ENCODE measurements at regions of chr2 and their contacts with region 1.

Region 1: DNA sequence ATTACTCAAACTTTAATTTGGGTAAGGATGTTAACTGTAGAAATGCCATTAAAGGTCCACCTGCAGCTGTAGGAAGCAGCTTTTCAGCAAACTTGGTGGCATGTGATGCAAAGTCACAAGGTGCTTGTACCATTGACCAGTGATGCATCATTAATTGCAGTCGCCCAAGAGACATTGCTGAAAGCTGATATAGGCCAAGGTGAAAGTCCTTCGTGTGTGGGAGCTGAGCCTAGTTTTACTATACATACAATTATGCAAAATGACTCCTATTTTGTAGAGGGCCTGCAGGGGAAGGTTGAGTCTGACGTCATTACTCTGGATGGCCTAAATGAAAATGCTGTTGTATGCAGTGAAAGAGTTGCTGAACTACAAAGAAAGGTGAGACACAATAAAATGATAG is 40.5 kb downstream of the ALMS1 start:
- DNase-seq: no peak
- ATAC-seq: no peak
- H3K4me3 ChIP-seq: no peak overlapping the region
- H3K4me3 Mint-ChIP-seq: no peak overlapping the region
- H3K27ac ChIP-seq: no peak overlapping the region
- H3K27ac Mint-ChIP-seq: no peak overlapping the region
- H3K4me1 ChIP-seq: no peaks in the 10 kb centered on the region
- H3K4me1 Mint-ChIP-seq: peaks cover 0 to 2% (median 0%) of the 10 kb centered on the region in 3 donors
- H3K27me3 ChIP-seq: no peaks in the 10 kb centered on the region
- H3K27me3 Mint-ChIP-seq: no peaks in the 10 kb centered on the region

Region 2: DNA sequence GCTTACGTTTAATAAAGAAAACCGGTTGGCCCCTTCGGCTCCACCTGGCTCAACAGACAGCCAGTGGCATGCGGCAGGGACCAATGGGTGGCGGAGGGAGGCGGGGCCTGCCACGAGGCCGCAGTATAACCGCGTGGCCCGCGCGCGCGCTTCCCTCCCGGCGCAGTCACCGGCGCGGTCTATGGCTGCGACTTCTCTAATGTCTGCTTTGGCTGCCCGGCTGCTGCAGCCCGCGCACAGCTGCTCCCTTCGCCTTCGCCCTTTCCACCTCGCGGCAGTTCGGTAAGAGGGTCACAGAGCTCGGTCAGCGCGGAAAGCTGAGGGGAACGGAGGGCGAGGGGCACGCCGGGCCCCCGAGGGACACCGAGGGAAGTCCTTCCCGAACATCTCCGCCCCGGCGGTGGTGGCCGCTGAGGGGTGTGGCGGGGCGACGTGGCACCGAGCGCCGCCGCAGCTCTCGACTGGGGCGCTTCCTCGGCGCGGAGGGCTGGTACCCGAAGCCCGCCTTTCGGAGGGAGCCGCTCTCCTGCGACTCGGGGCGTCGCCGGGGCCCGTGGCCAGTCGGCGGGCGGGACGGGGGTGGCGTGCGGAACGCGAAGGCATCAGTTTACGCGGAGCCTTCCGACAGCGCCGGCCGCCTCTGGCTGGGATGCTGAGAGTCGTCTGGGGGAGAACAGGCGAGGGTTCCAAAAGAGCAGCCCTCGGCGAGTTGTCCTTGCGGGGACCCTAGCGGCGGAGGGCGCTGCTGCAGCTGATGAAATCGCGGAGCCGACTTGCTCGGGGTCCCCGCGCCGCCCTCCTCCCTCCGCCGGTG is 772.5 kb after region 1 on chr2 and contains the start of gene MTHFD2:
- CTCF ChIA-PET with region 1: no interaction called
- POLR2A ChIA-PET with region 1: no interaction called
- DNase-seq: peak; percentile 73 to 93 (median 83)
- ATAC-seq: peak; percentile 89 to 91 (median 89)
- H3K4me3 ChIP-seq: peak within 1 kb of the TSS; percentile 69 to 72
- H3K4me3 Mint-ChIP-seq: peak within 1 kb of the TSS; percentile 92 to 99 (median 94)
- H3K27ac ChIP-seq: peak within 1 kb of the TSS; percentile 85
- H3K27ac Mint-ChIP-seq: peak within 1 kb of the TSS; percentile 100
- H3K4me1 ChIP-seq: peaks cover 10 to 21% of the 10 kb centered on the region in 2 experiments
- H3K4me1 Mint-ChIP-seq: peaks cover 33 to 37% (median 37%) of the 10 kb centered on the region in 3 donors
- H3K27me3 ChIP-seq: peaks cover 0 to 5% of the 10 kb centered on the region in 2 experiments
- H3K27me3 Mint-ChIP-seq: no peaks in the 10 kb centered on the region
- total RNA-seq, gene MTHFD2: 26.3 to 59.3 (median 47.9) TPM

Region 3: GRCh38 chr2:74966887-74967286 is 1540.7 kb after region 1 on chr2:
- CTCF ChIA-PET with region 1: interaction called in 1 of 2 experiments, 10 read pairs
- POLR2A ChIA-PET with region 1: no interaction called
- DNase-seq: no peak
- ATAC-seq: peak in 1 of 4 experiments; percentile 57
- H3K4me3 ChIP-seq: no peak overlapping the region
- H3K4me3 Mint-ChIP-seq: peak overlapping the region in 1 of 3 donors; percentile 3
- H3K27ac ChIP-seq: no peak overlapping the region
- H3K27ac Mint-ChIP-seq: peak overlapping the region; percentile 39 to 65
- H3K4me1 ChIP-seq: no peaks in the 10 kb centered on the region
- H3K4me1 Mint-ChIP-seq: peaks cover 22 to 37% (median 37%) of the 10 kb centered on the region in 3 donors
- H3K27me3 ChIP-seq: no peaks in the 10 kb centered on the region
- H3K27me3 Mint-ChIP-seq: no peaks in the 10 kb centered on the region